ENCODE measurements at regions of chr17 and their contacts with region 1.

Region 1: GRCh38 chr17:16491703-16492612 is at the start of gene LRRC75A:
- DNase-seq: no peak
- H3K4me3 ChIP-seq: peak within 1 kb of the TSS; percentile 64 to 87
- H3K27ac ChIP-seq: peak within 1 kb of the TSS in 1 of 2 donors; percentile 46
- H3K4me1 ChIP-seq: peaks cover 0 to 21% of the 10 kb centered on the region in 2 donors
- H3K27me3 ChIP-seq: no peaks in the 10 kb centered on the region
- CTCF ChIP-seq: peak in 1 of 3 experiments; percentile 29
- total RNA-seq, gene LRRC75A: 1.2 TPM

Region 2: DNA sequence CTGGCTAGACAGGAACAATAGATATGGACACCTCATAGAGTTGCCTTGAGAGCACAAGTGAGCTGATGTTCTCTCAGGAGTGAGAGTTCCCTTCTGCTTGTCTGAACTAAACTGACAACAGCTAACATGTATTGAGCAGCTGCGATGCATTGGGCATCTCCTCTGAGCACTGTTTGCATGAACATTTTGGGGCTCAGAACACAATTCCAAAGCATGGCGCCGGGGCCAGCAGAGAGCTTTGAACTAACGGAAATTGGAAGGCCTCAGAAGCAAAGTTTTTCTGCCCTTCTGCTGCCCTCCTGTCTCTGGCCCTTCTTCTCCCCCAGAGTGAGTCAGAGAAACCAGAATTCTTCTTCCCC is 38.5 kb before region 1 on chr17:
- intact Hi-C with region 1: loop called (anchors 5 kb)
- DNase-seq: no peak
- H3K4me3 ChIP-seq: no peak overlapping the region
- H3K27ac ChIP-seq: no peak overlapping the region
- H3K4me1 ChIP-seq: no peaks in the 10 kb centered on the region
- H3K27me3 ChIP-seq: no peaks in the 10 kb centered on the region
- CTCF ChIP-seq: no peak

Region 3: GRCh38 chr17:16477255-16477654 is 14.7 kb before region 1 on chr17:
- intact Hi-C with region 1: loop called (anchors 1 kb)
- DNase-seq: peak in 1 of 2 donors; percentile 86
- H3K4me3 ChIP-seq: no peak overlapping the region
- H3K27ac ChIP-seq: peak overlapping the region; percentile 79 to 89
- H3K4me1 ChIP-seq: peaks cover 7 to 21% of the 10 kb centered on the region in 2 donors
- H3K27me3 ChIP-seq: no peaks in the 10 kb centered on the region
- CTCF ChIP-seq: no peak

Measured in ascending aorta (tissue), 2 donors.